Left lung (tissue), 14 donors: ENCODE measurements at regions of chr20 and their contacts with region 1.

Region 1: DNA sequence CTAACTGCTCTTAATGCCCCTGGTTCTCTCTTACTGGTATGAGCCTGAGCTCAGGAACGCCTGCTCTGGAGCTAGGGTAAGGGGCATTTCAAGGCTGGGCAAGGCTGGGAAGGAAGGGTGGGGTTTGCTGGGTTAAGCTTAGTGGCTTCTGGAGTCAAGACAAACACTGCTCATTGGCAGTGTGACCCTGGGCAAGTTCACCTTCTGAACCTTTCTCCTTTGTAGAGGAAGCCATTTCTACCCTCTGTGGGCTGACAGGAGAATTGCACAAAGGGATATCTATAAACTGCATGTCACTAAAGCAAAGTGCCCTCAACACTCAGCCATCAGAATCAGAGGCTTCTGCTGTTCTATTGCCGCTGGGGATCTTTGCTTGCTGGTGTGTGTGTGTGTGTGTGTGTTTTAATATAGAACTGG is 20.3 kb upstream of the LRRN4 start:
- DNase-seq: no peak
- ATAC-seq: peak; percentile 89
- H3K4me3 ChIP-seq: no peak overlapping the region
- H3K27ac ChIP-seq: no peak overlapping the region
- H3K4me1 ChIP-seq: no peaks in the 10 kb centered on the region
- H3K27me3 ChIP-seq: no peaks in the 10 kb centered on the region
- CTCF ChIP-seq: peak in 1 of 2 donors; percentile 21

Region 2: GRCh38 chr20:5950271-5951031 is 123.7 kb before region 1 on chr20 and contains the starts of genes MCM8 and TRMT6:
- intact Hi-C with region 1: loop called in 1 of 2 experiments (anchors 10 kb)
- DNase-seq: peak; percentile 91 to 98 (median 96)
- ATAC-seq: peak; percentile 100
- H3K4me3 ChIP-seq: peak within 1 kb of the TSS; percentile 78 to 83
- H3K27ac ChIP-seq: peak within 1 kb of the TSS in 1 of 2 donors; percentile 77
- H3K4me1 ChIP-seq: peaks cover 13 to 54% of the 10 kb centered on the region in 2 donors
- H3K27me3 ChIP-seq: no peaks in the 10 kb centered on the region
- CTCF ChIP-seq: no peak
- polyA plus RNA-seq, gene MCM8: 11.5 to 20.2 (median 16.3) TPM
- polyA plus RNA-seq, gene TRMT6: 10.9 to 14.5 (median 12.3) TPM